ENCODE measurements at regions of chr15 and their contacts with region 1.

Region 1: DNA sequence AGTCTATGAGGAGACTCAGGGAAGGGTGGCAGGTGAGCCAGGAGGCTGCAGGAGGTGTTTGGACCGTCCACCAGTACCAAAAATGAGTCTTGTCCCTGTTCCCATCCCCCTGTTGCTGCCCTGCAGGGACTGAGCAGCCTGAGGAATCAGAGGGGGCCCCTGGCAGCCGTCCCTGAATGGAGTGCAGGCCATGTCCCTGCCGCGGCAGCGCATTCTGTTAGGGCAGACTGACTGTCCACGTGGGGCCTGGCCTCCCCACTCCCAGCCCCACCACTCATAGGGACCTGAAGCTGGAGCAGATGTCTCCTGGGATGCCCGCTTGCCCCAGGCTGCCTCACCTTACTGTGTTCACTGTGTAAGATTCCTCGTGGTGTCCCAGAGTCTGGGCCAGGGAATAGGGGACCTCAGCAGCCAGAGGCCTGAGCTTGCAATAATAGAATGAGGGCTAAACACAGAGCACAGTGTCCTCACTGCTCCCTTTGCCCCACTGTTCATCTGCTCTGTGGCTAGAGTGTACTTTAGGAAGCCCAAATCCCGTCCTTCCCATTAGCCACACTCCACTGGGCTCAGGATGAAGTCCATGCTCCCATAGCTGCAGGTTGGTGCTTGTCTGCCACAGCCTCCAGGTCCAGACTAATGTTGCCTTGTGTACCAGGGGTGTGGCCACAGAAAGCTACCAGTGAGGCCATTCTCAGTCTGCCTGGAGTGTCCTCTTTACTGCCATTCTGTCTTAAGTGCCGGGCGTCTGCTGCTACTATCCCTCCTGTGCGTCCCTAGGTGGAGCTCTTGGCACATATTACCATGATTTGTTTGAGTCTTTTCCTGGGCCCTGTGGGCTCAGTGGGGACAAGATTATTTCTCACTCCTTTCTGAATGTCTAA is 63.2 kb downstream of the HCN4 start:
- ATAC-seq: peak; percentile 93 to 99 (median 96)
- H3K4me3 ChIP-seq: no peak overlapping the region
- H3K27ac ChIP-seq: no peak overlapping the region
- H3K4me1 ChIP-seq: peaks cover 2 to 3% of the 10 kb centered on the region in 2 donors

Region 2: DNA sequence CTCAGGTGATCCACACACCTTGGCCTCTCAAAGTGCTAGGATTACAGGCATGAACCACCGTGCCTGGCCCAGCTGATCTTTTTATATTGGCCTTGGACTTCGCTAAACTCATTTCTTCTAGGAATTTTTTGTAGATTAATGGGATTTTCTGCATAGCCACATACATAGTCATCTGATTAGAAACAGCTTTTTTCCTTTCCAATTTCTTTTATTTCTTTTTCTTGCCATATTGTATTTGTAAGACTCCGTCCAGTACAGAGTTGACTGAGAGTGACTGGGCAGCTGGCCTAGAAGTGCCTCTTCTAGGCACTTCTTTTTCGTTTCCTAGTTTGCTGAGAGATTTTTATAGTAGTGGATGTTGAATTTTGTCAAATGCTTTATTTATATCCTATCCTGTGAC is 794.0 kb before region 1 on chr15:
- in situ Hi-C with region 1: no loop called
- ATAC-seq: no peak
- H3K4me3 ChIP-seq: no peak overlapping the region
- H3K27ac ChIP-seq: no peak overlapping the region
- H3K4me1 ChIP-seq: no peaks in the 10 kb centered on the region

Region 3: DNA sequence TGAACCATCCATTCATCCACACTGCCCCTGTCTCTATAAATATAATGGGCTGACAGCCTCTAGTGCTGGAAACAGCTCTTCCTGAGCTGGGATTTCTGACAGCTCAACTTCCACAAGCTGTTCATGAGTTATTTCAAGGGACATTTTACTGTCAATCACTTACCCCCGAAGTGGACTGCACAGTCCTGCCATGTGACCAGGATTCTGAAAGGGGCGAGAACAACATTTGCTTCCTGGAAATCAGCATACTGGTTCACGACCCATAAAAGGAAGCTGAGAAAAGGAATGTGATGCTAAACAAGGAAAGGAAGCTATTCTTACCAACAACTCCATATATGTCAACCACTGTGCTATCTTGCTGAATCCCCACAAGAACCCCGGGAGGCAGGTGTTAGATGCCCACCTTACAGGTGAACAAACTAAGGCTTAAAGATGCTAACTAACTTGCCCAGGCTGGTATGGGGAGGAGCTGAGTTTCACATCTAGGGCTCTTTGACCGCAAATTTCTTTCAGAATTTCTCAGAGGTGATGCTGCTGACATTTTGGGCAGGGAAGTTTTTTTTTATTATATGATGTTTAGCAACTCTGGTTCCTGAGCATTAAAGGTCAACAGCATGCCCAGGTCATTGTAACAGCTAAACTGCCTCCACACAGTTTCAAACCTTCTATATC is 120.9 kb after region 1 on chr15:
- in situ Hi-C with region 1: no loop called
- ATAC-seq: peak in 3 of 8 experiments; percentile 26 to 87 (median 75)
- H3K4me3 ChIP-seq: no peak overlapping the region
- H3K27ac ChIP-seq: no peak overlapping the region
- H3K4me1 ChIP-seq: peaks cover 0 to 4% of the 10 kb centered on the region in 2 donors

Region 4: DNA sequence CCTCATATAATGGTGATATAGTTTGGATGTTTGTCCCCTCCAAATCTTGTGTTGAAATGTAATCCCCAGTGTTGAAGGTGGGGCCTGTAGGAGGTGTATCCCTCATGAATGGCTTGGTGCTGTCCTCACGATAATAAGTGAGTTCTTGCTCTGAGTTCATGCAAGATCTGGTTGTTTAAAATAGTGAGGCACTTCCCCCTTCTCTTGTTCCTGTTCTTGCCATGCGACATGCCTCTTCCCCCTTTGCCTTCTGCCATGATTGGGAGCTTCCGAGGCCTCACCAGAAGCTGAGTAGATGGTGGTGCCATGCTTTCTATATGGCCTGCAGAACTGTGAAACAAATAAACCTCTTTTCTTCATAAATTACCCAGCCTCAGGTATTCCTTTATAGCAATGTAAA is 176.6 kb after region 1 on chr15:
- in situ Hi-C with region 1: no loop called
- ATAC-seq: no peak
- H3K4me3 ChIP-seq: no peak overlapping the region
- H3K27ac ChIP-seq: no peak overlapping the region
- H3K4me1 ChIP-seq: no peaks in the 10 kb centered on the region

Region 5: GRCh38 chr15:73539212-73540125 is 233.9 kb after region 1 on chr15:
- in situ Hi-C with region 1: loop called in 1 of 9 experiments (anchors 25 kb)
- ATAC-seq: no peak
- H3K4me3 ChIP-seq: no peak overlapping the region
- H3K27ac ChIP-seq: no peak overlapping the region
- H3K4me1 ChIP-seq: no peaks in the 10 kb centered on the region

Region 6: GRCh38 chr15:73560501-73561117 is 255.0 kb after region 1 on chr15:
- in situ Hi-C with region 1: loop called in 2 of 9 experiments (anchors 25 kb)
- ATAC-seq: peak in 7 of 8 experiments; percentile 38 to 78 (median 61)
- H3K4me3 ChIP-seq: no peak overlapping the region
- H3K27ac ChIP-seq: no peak overlapping the region
- H3K4me1 ChIP-seq: peaks cover 0 to 8% of the 10 kb centered on the region in 2 donors